SK-N-SH (cell line): ENCODE measurements at regions of chr7 and their contacts with region 1.

Region 1: DNA sequence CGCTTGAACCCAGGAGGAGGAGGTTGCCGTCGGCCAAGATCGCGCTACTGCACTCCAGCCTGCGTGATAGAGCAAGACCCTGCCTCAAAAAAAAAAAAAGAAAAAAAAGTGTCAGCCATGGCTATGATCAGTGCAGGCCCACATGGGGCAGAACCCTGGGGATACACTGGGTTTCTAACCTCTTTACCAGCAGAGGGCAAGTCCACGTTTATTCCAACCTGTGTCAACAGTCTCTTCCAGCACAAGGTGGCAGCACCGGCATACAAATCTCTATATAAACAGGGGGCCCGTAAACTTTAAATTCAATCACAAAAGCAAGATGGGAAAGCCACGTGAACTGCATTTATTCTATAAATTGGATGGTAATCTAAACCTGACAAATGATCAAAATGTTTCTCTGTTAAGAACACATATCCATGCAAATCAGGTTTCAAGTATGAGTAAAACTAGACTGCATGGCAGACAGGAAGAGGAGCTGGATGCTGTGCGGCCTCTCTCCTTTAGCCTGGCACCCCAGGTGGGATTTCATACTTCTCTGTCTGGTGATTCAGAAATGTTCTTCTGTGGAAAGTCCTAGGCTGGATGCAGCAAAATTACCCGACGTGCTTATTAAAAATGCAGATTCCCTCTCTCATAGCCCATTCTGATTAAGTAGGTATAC is 60.0 kb upstream of the STEAP1B start:
- DNase-seq: peak; percentile 77
- H3K4me3 ChIP-seq: peak overlapping the region in 1 of 2 experiments; percentile 11; a peak in 1 of 4 replicates
- H3K27ac ChIP-seq: peak overlapping the region in 1 of 2 experiments; percentile 89; a peak in 1 of 4 replicates
- H3K4me1 ChIP-seq: peaks cover 4 to 19% of the 10 kb centered on the region in 2 experiments; a peak in 2 of 4 replicates
- H3K27me3 ChIP-seq: peaks cover 21% of the 10 kb centered on the region; the same call in 1 of the 2 replicates
- CTCF ChIP-seq: peak; percentile 100
- EP300 ChIP-seq: no peak
- RAD21 ChIP-seq: peak; percentile 96

Region 2: GRCh38 chr7:22542254-22542653 is 17.7 kb before region 1 on chr7:
- CTCF ChIA-PET with region 1: interaction called, 25 read pairs
- POLR2A ChIA-PET with region 1: no interaction called
- DNase-seq: no peak
- H3K4me3 ChIP-seq: no peak overlapping the region
- H3K27ac ChIP-seq: no peak overlapping the region
- H3K4me1 ChIP-seq: no peaks in the 10 kb centered on the region
- H3K27me3 ChIP-seq: peaks cover 62% of the 10 kb centered on the region
- CTCF ChIP-seq: no peak
- EP300 ChIP-seq: no peak
- RAD21 ChIP-seq: no peak

Region 3: DNA sequence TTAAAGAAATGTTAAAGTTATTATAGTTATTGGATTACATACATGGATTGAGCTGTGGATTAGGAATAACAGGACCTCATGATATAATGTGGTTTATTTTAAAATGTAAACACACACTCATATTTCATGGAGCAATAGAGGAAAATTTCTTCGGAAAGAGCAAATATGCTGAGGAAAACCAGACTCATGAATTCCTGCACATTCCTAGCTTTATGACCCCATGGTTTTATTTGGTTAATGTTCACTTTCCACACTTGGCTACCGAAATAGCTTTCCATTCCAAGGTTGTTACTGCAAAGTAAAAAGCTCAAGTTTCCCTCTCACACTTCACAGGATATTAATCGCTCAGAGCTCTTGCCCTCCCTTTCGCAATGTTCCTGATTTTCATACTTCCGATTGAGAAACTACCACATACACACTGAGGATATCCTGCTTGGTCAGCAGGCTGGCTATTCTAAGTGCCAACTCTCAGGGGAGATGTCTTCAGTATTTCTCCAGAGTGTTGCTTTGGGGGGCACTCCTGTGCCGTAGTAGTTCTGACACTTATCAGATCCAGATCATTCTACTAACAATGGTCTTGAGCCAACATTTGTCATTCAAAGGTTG is 17.5 kb after region 1 on chr7:
- CTCF ChIA-PET with region 1: interaction called, 20 read pairs
- POLR2A ChIA-PET with region 1: no interaction called
- DNase-seq: no peak
- H3K4me3 ChIP-seq: no peak overlapping the region
- H3K27ac ChIP-seq: peak overlapping the region; percentile 74 to 80; a peak in 3 of 4 replicates
- H3K4me1 ChIP-seq: peaks cover 0 to 6% of the 10 kb centered on the region in 2 experiments; a peak in 3 of 4 replicates
- H3K27me3 ChIP-seq: peaks cover 4% of the 10 kb centered on the region; the same call in 1 of the 2 replicates
- CTCF ChIP-seq: peak; percentile 9; the same call in 1 of the 2 replicates
- EP300 ChIP-seq: peak; percentile 31 to 45; a peak in 1 of 4 replicates
- RAD21 ChIP-seq: no peak

Region 4: GRCh38 chr7:22860784-22861482 is 301.0 kb after region 1 on chr7:
- CTCF ChIA-PET with region 1: interaction called, 13 read pairs
- POLR2A ChIA-PET with region 1: no interaction called
- DNase-seq: peak; percentile 42
- H3K4me3 ChIP-seq: no peak overlapping the region
- H3K27ac ChIP-seq: peak overlapping the region in 1 of 2 experiments; percentile 39; a peak in 2 of 4 replicates
- H3K4me1 ChIP-seq: peaks cover 0 to 7% of the 10 kb centered on the region in 2 experiments; a peak in 2 of 4 replicates
- H3K27me3 ChIP-seq: no peaks in the 10 kb centered on the region
- CTCF ChIP-seq: peak; percentile 61
- EP300 ChIP-seq: no peak
- RAD21 ChIP-seq: peak; percentile 45

Region 5: DNA sequence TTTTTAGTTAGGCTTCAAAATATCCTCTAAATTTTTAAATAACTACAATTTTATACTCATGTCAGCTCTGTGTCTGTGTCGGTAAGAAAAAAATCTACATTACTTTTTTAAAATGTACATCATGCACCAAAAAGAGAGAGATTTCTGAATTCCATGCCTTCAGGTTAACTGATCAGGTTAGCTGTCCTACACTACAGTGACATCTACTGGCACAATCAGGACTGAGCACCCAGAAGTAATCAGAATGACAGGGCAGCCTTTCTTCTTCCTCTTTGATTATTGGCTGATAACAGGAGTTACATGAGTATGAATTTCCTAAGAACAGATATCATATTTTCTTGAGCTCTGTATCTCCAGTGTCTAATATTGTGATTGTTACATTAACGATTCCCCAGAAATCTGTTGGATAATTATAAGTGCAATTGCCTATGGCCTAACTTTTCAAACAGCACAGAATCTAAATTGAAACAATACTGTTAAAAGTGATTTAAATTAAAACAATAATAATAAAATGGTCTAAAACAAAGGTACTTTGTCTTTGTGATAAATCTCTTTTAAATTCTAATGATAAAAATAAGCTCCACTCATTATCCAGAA is 495.7 kb after region 1 on chr7:
- CTCF ChIA-PET with region 1: interaction called, 268 read pairs
- POLR2A ChIA-PET with region 1: no interaction called
- DNase-seq: peak; percentile 70
- H3K4me3 ChIP-seq: no peak overlapping the region; a peak in 1 of 4 replicates
- H3K27ac ChIP-seq: no peak overlapping the region
- H3K4me1 ChIP-seq: no peaks in the 10 kb centered on the region
- H3K27me3 ChIP-seq: no peaks in the 10 kb centered on the region; the same call in 1 of the 2 replicates
- CTCF ChIP-seq: peak; percentile 100
- EP300 ChIP-seq: no peak
- RAD21 ChIP-seq: peak; percentile 98